PC-3 (cell line): ENCODE measurements at regions of chr7 and their contacts with region 1.

Region 1: GRCh38 chr7:54546081-54546985 is 4.2 kb downstream of the VSTM2A start:
- DNase-seq: peak; percentile 14
- ATAC-seq: peak; percentile 85
- H3K4me3 ChIP-seq: peak overlapping the region; percentile 42; the same call in 1 of the 2 replicates
- H3K27ac ChIP-seq: no peak overlapping the region
- H3K4me1 ChIP-seq: no peaks in the 10 kb centered on the region
- H3K27me3 ChIP-seq: peaks cover 63% of the 10 kb centered on the region
- CTCF ChIP-seq: peak; percentile 44

Region 2: DNA sequence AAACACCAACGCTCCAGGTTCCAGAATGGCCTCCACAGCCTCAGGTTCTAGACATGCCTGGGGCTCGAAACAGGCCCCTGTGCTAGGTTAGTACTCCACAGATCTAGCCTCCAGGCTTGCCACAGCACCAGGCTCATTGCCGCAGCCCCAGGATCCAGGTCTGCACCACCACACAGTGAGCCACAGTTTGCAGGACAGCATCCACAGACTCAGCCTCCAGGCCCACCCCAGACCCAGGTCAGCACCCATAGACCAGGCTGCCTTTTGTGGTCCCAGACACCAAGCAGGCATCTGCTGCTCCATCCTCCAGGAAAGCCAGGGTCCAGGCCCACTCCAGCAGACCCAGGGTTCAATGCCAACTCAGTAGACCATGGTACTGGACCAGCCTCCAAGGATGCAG is 136.4 kb before region 1 on chr7:
- CTCF ChIA-PET with region 1: no interaction called
- POLR2A ChIA-PET with region 1: no interaction called
- intact Hi-C with region 1: no loop called
- DNase-seq: no peak
- ATAC-seq: no peak
- H3K4me3 ChIP-seq: no peak overlapping the region
- H3K27ac ChIP-seq: no peak overlapping the region
- H3K4me1 ChIP-seq: no peaks in the 10 kb centered on the region
- H3K27me3 ChIP-seq: no peaks in the 10 kb centered on the region
- CTCF ChIP-seq: no peak

Region 3: GRCh38 chr7:54596747-54597146 is 50.4 kb after region 1 on chr7:
- CTCF ChIA-PET with region 1: no interaction called
- POLR2A ChIA-PET with region 1: no interaction called
- intact Hi-C with region 1: no loop called
- DNase-seq: no peak
- ATAC-seq: no peak
- H3K4me3 ChIP-seq: no peak overlapping the region
- H3K27ac ChIP-seq: no peak overlapping the region
- H3K4me1 ChIP-seq: no peaks in the 10 kb centered on the region
- H3K27me3 ChIP-seq: peaks cover 44% of the 10 kb centered on the region
- CTCF ChIP-seq: no peak

Region 4: DNA sequence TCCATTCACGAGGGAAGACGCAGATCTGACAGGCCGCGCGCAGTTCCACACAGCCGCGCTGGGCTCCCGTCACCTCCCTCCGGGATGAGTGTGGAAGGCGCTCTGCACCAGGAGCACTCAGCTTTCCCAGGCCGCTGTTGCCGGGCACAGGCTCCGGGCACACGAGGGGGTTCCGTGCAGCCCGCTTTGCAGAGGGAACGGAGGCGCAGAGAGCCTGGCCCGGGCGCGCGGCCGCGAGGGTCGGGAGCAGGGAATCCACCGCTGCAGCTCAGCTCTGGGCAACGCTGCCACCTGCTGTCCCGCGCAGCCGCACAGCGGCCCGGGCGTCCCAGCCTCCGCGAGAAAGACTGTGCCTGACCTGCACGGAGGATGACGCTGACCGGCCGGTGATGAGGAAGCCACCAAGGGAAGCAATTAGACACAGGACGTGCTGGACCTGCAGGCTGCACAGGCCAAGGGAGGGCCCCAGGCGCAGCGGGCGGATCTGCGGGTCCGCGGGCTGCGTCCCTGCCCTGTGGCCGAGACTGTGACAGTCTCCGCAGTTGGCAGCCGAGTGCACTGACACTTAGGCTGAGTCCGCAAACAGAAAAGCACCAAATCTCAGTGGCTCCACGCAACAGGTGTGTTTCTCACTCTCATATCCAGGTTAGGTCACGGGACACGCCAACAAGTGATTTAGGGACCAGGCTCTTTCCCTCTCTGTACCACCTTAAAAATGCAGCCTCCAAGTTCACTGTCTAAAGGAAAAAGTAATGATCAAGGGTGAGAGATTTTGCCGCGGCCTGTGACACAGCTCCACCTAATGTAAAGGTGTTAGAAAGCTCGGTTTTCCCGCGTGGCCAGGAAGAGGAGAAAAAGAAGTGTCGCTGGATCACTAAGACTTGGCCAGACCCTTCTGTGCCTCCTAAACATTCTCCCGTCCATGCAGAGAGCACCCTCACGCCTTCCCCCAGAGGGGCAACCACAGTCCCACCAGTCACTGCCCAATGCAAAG is 118.2 kb after region 1 on chr7:
- CTCF ChIA-PET with region 1: no interaction called
- POLR2A ChIA-PET with region 1: no interaction called
- intact Hi-C with region 1: loop called (anchors 1 kb)
- DNase-seq: peak; percentile 69
- ATAC-seq: peak; percentile 96
- H3K4me3 ChIP-seq: peak overlapping the region; percentile 63
- H3K27ac ChIP-seq: no peak overlapping the region
- H3K4me1 ChIP-seq: peaks cover 9% of the 10 kb centered on the region; the same call in 1 of the 2 replicates
- H3K27me3 ChIP-seq: peaks cover 55% of the 10 kb centered on the region
- CTCF ChIP-seq: peak; percentile 53